HCT116 (cell line): ENCODE measurements at regions of chr1 and their contacts with region 1.

Region 1: GRCh38 chr1:8848663-8849386 is 29.7 kb downstream of the ENO1 start:
- DNase-seq: peak; percentile 55
- ATAC-seq: peak; percentile 98
- H3K4me3 ChIP-seq: no peak overlapping the region
- H3K27ac ChIP-seq: no peak overlapping the region
- H3K4me1 ChIP-seq: peaks cover 0 to 4% of the 10 kb centered on the region in 2 experiments; a peak in 2 of 4 replicates
- H3K27me3 ChIP-seq: peaks cover 3% of the 10 kb centered on the region; the same call in 1 of the 2 replicates
- CTCF ChIP-seq: peak; percentile 84 to 96 (median 96)
- POLR2A ChIP-seq: no peak
- RAD21 ChIP-seq: peak; percentile 93

Region 2: GRCh38 chr1:8560611-8561544 is 287.9 kb before region 1 on chr1:
- CTCF ChIA-PET with region 1: interaction called, 48 read pairs
- POLR2A ChIA-PET with region 1: no interaction called
- RAD21 ChIA-PET with region 1: interaction called, 4 to 5 read pairs
- intact Hi-C with region 1: loop called (anchors 1 kb)
- DNase-seq: peak; percentile 16
- ATAC-seq: peak; percentile 79
- H3K4me3 ChIP-seq: no peak overlapping the region
- H3K27ac ChIP-seq: no peak overlapping the region
- H3K4me1 ChIP-seq: peaks cover 5 to 16% of the 10 kb centered on the region in 2 experiments; a peak in 3 of 4 replicates
- H3K27me3 ChIP-seq: no peaks in the 10 kb centered on the region
- CTCF ChIP-seq: peak; percentile 81 to 96 (median 84)
- POLR2A ChIP-seq: no peak
- RAD21 ChIP-seq: peak; percentile 88

Region 3: DNA sequence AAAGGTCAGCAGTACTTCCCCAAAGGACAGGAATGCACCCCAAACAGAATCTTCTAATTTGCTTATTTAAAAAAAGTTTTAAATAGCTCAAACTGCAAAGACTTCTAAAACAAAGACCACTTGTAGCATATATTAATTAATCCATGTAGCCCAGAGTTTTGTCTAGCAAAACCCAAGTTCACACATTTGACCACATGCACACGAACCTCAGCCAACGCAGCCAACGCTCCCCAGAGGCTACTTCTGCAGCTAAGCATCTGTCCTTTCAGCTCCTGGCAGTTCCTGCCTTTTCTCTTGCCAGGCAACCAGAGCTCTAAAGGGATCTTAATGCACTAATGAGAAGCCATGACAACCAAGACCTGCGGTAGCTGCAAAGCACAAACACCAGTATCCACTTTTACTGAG is 121.0 kb before region 1 on chr1:
- CTCF ChIA-PET with region 1: interaction called, 27 read pairs
- POLR2A ChIA-PET with region 1: no interaction called
- RAD21 ChIA-PET with region 1: interaction called, 3 to 10 read pairs
- intact Hi-C with region 1: loop called (anchors 5 kb)
- DNase-seq: no peak
- ATAC-seq: no peak
- H3K4me3 ChIP-seq: no peak overlapping the region
- H3K27ac ChIP-seq: no peak overlapping the region
- H3K4me1 ChIP-seq: peaks cover 0 to 5% of the 10 kb centered on the region in 2 experiments; a peak in 2 of 4 replicates
- H3K27me3 ChIP-seq: no peaks in the 10 kb centered on the region
- CTCF ChIP-seq: no peak
- POLR2A ChIP-seq: no peak
- RAD21 ChIP-seq: no peak

Region 4: GRCh38 chr1:8746554-8746953 is 102.3 kb before region 1 on chr1:
- CTCF ChIA-PET with region 1: no interaction called
- POLR2A ChIA-PET with region 1: no interaction called
- RAD21 ChIA-PET with region 1: no interaction called
- intact Hi-C with region 1: no loop called
- DNase-seq: no peak
- ATAC-seq: no peak
- H3K4me3 ChIP-seq: no peak overlapping the region
- H3K27ac ChIP-seq: no peak overlapping the region
- H3K4me1 ChIP-seq: no peaks in the 10 kb centered on the region
- H3K27me3 ChIP-seq: no peaks in the 10 kb centered on the region
- CTCF ChIP-seq: no peak
- POLR2A ChIP-seq: no peak
- RAD21 ChIP-seq: no peak

Region 5: DNA sequence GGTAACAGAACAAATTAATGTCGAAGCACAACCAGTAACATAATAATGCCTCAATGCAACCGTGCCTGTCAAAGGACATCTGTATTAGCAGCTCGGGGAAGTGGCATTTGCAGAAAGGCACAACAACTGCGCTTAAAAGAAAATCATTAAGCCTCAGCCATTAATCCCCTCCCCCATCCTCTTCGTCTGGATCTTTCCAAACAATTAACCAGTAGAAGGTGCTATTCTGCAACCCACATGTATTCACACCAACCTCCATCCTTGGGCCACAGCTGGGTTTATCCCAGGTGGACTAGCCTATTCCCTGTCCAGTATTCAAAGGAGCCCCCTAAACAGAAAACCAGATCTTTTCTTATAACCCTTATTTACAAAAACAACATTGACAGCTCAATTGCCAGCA is 34.0 kb before region 1 on chr1:
- CTCF ChIA-PET with region 1: interaction called, 22 read pairs
- POLR2A ChIA-PET with region 1: interaction called, 5 read pairs
- RAD21 ChIA-PET with region 1: interaction called, 3 to 8 read pairs
- intact Hi-C with region 1: no loop called
- DNase-seq: no peak
- ATAC-seq: no peak
- H3K4me3 ChIP-seq: no peak overlapping the region
- H3K27ac ChIP-seq: no peak overlapping the region
- H3K4me1 ChIP-seq: peaks cover 11 to 33% of the 10 kb centered on the region in 2 experiments; a peak in 3 of 4 replicates
- H3K27me3 ChIP-seq: no peaks in the 10 kb centered on the region
- CTCF ChIP-seq: peak; percentile 22 to 54 (median 44); a peak in 4 of 6 replicates
- POLR2A ChIP-seq: no peak
- RAD21 ChIP-seq: peak; percentile 49

Region 6: DNA sequence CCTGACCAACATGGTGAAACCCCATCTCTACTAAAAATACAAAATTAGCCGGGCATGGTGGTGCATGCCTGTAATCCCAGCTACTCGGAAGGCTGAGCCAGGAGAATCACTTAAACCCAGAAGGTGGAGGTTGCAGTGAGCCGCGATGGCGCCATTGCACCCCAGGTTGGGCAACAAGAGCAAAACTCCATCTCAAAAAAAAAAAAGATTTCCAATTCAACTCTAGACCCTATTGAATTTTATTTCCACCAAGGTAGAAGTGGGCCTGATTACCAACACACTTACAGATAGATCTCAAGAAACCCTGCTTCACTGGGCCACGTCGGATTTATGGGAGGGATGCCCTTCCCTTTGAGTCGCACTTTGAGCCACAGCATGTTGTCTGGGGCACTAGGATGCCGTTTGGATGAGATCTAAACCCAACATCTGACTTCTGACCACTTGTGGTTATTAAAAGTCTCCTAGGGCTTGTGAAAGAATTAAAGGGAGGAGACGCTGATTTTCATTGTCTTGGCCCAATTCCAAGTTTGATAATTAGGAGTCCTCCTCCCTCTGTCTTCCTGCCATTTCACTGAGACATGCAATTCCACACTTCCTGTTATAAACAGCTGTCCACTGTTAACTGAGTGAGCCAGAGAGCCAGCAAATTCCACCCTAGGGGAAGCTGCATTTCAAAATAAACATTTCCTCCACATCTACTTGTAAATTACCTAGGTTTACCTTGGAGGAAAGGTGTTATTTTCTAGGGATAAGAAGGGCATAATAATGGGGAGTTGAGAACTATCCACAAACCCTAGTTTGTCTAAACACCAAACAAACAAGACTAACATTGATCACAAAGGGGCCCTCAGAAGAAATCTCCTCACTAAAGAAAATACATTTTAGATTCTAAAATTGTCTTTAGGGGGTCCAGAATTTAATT is 26.2 kb before region 1 on chr1:
- CTCF ChIA-PET with region 1: interaction called, 22 read pairs
- POLR2A ChIA-PET with region 1: interaction called, 5 read pairs
- RAD21 ChIA-PET with region 1: interaction called in 1 of 2 experiments, 4 read pairs
- intact Hi-C with region 1: no loop called
- DNase-seq: peak; percentile 37
- ATAC-seq: peak; percentile 21; the same call in 1 of the 2 replicates
- H3K4me3 ChIP-seq: no peak overlapping the region
- H3K27ac ChIP-seq: peak overlapping the region; percentile 22; the same call in 1 of the 2 replicates
- H3K4me1 ChIP-seq: peaks cover 25 to 40% of the 10 kb centered on the region in 2 experiments
- H3K27me3 ChIP-seq: no peaks in the 10 kb centered on the region
- CTCF ChIP-seq: no peak
- POLR2A ChIP-seq: no peak
- RAD21 ChIP-seq: no peak

Region 7: GRCh38 chr1:8835941-8836643 is 12.7 kb before region 1 on chr1:
- CTCF ChIA-PET with region 1: interaction called, 15 read pairs
- POLR2A ChIA-PET with region 1: interaction called, 3 read pairs
- RAD21 ChIA-PET with region 1: no interaction called
- intact Hi-C with region 1: no loop called
- DNase-seq: no peak
- ATAC-seq: no peak
- H3K4me3 ChIP-seq: no peak overlapping the region
- H3K27ac ChIP-seq: no peak overlapping the region
- H3K4me1 ChIP-seq: no peaks in the 10 kb centered on the region
- H3K27me3 ChIP-seq: no peaks in the 10 kb centered on the region
- CTCF ChIP-seq: no peak
- POLR2A ChIP-seq: no peak
- RAD21 ChIP-seq: no peak

Region 8: DNA sequence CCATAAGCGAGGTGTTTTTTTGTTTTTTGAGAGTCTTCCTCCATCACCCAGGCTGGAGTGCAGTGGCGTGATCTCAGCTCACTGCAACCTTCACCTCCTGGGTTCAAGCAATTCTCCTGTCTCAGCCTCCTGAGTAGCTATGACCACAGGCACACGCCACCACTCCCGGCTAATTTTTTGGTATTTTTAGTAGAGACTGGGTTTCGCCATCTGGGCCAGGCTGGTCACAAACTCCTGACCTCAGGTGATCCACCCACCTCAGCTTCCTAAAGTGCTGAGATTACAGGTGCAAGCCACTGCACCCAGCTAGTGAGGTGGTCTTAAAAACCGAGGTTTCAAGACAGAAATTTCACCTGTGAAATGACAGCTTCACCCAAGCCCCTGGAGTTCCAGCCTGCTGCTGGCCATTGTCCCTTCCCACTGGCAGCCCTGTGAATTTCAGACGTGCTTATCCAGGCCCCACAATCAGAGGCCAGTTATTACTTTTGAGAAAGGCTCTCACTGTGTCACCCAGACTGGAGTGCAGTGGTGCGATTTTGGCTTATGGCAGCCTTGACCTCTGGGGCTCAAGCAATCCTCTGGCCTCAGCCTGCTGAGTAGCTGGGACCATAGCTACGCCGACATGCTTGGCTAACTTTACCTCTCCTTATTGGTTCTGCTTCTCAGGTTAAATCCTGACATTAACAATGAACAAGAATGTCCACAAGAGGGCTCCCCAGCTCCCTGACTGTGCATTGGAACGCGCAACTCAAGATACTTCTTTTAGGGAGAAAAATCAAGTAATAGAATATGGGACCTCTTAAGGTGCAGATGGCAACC is 10.3 kb after region 1 on chr1:
- CTCF ChIA-PET with region 1: interaction called, 103 read pairs
- POLR2A ChIA-PET with region 1: interaction called, 7 read pairs
- RAD21 ChIA-PET with region 1: no interaction called
- intact Hi-C with region 1: no loop called
- DNase-seq: no peak
- ATAC-seq: peak; percentile 63
- H3K4me3 ChIP-seq: no peak overlapping the region
- H3K27ac ChIP-seq: peak overlapping the region; percentile 19; the same call in 1 of the 2 replicates
- H3K4me1 ChIP-seq: peaks cover 2 to 37% of the 10 kb centered on the region in 2 experiments; a peak in 2 of 4 replicates
- H3K27me3 ChIP-seq: no peaks in the 10 kb centered on the region
- CTCF ChIP-seq: peak; percentile 41 to 81 (median 50); a peak in 5 of 6 replicates
- POLR2A ChIP-seq: no peak
- RAD21 ChIP-seq: peak; percentile 60